ENCODE measurements at regions of chr1 and their contacts with region 1.

Region 1: DNA sequence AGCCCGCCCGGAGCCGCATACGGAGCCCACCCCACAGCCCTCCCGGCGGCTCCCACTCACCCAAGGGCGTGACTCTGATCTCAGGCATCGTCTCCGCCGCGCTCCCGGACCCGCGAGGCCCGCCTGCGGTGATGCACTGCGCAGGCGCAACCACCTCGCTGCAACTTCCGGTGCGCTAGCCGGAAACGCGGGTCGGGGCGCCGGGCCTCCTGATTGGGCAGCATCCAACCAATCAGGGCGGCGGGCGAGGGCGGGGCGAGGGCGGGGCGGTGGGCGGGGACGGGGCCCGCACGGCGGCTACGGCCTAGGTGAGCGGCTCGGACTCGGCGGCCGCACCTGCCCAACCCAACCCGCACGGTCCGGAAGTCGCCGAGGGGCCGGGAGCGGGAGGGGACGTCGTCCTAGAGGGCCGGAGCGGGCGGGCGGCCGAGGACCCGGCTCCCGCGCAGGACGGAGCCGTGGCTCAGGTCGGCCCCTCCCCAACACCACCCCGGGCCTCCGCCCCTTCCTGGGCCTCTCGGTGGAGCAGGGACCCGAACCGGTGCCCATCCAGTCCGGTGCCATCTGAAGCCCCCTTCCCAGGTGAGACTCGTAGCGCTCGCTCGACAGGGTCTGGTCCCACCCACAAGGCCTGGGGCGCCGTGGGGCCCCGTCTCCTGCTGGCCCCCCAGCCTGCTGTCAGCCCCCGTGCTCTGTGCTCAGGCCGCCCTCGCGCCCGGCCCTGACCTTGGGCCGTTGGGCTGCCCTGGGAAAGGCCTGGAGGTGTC is at the starts of genes CPTP and INTS11:
- DNase-seq: peak; percentile 68 to 96
- H3K4me3 ChIP-seq: peak within 1 kb of the TSS; percentile 70 to 89
- H3K27ac ChIP-seq: peak within 1 kb of the TSS; percentile 72 to 76
- H3K4me1 ChIP-seq: peaks cover 8 to 33% of the 10 kb centered on the region in 2 donors
- H3K27me3 ChIP-seq: no peaks in the 10 kb centered on the region
- CTCF ChIP-seq: no peak
- total RNA-seq, gene CPTP: 71.3 TPM
- total RNA-seq, gene INTS11: 214 TPM

Region 2: DNA sequence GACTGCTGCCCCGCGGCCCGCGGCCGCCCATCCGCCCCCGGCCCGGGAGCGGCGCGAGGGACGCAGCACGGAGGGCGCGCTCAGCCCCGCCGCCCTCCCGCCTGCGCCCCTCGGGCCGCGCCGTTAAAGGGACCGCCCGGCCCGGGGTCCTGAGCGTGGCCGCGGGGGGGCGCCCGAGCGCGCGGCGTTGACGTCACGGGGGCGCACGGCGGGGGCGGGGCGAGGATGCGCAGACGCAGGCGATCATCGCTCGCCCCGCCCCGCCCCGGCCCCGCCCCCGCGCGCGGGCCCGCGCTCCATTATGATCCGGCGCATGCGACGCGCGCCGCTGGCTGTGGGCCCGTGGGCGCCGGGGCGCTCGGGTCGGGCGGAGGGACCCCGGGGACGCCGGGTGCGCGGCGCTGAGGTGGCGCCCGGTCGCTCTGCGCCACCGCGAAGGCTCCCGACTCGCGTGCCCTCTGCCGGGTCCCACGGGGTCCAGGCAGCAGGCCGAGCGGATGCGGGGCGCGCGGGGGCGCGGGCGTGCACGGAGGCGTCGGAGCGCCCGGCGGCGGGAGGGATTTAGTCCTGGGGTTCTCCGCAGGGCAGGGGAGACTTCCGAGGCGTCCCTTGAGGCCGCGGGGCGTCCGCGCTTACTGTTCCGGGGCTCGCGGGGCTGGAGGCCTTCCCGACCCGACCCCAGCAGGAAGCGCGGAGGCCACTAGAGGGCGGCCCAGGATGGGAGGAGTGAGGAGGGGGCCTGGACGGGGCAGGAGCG is 24.7 kb after region 1 on chr1 and contains the start of gene DVL1:
- intact Hi-C with region 1: loop called (anchors 1 kb)
- DNase-seq: peak in 1 of 2 donors; percentile 83
- H3K4me3 ChIP-seq: peak within 1 kb of the TSS; percentile 91 to 93
- H3K27ac ChIP-seq: peak within 1 kb of the TSS; percentile 69 to 79
- H3K4me1 ChIP-seq: peaks cover 7 to 54% of the 10 kb centered on the region in 2 donors
- H3K27me3 ChIP-seq: no peaks in the 10 kb centered on the region
- CTCF ChIP-seq: peak; percentile 52 to 75 (median 68)
- total RNA-seq, gene DVL1: 66.7 TPM

Region 3: DNA sequence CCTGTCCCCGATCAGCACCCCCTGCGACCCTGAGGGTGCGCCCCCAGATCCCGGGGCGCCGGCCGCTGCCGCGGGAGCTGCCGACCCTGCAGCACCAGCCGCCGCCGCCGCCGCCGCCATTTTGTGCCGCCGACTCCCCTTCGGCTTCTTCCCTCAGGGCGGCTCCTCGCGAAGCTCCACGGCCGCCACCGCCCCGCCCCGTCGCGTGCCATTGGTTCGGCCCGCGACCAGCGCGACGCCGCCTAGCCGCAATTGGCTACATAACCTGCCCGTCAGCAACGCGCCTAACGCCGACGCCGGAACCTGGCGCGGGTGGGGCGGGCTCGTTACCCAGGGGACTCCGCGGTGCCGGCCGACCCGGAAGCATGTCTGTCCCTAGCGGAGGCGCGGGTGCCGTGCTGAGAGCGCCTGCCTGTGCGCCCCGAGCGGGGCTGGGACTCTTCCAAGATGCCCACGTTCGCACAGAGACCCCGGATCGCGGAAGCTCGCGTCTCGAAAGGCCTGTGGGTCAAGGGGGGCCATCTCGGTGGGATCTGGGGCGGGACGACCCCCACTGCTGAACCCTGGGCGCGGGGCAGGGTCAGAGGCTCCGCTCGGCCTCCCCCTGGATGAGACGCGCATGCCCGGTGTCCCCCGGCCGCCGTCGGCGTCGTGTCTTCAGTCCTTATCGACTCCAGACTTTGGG is 74.6 kb after region 1 on chr1 and contains the start of gene CCNL2:
- intact Hi-C with region 1: loop called (anchors 1 kb)
- DNase-seq: peak; percentile 89 to 99
- H3K4me3 ChIP-seq: peak within 1 kb of the TSS; percentile 81 to 92
- H3K27ac ChIP-seq: peak within 1 kb of the TSS; percentile 75 to 80
- H3K4me1 ChIP-seq: peaks cover 10 to 24% of the 10 kb centered on the region in 2 donors
- H3K27me3 ChIP-seq: no peaks in the 10 kb centered on the region
- CTCF ChIP-seq: peak; percentile 64 to 77 (median 70)
- total RNA-seq, gene CCNL2: 150 TPM

Region 4: GRCh38 chr1:1451696-1452367 is 127.1 kb after region 1 on chr1:
- intact Hi-C with region 1: no loop called
- DNase-seq: no peak
- H3K4me3 ChIP-seq: no peak overlapping the region
- H3K27ac ChIP-seq: no peak overlapping the region
- H3K4me1 ChIP-seq: no peaks in the 10 kb centered on the region
- H3K27me3 ChIP-seq: no peaks in the 10 kb centered on the region
- CTCF ChIP-seq: no peak

Region 5: GRCh38 chr1:1788646-1789431 is 464.1 kb after region 1 on chr1:
- intact Hi-C with region 1: no loop called
- DNase-seq: no peak
- H3K4me3 ChIP-seq: no peak overlapping the region
- H3K27ac ChIP-seq: peak overlapping the region in 1 of 2 donors; percentile 55
- H3K4me1 ChIP-seq: peaks cover 0 to 4% of the 10 kb centered on the region in 2 donors
- H3K27me3 ChIP-seq: no peaks in the 10 kb centered on the region
- CTCF ChIP-seq: peak in 1 of 3 experiments; percentile 7

Measured in ascending aorta (tissue), 2 donors.